IMR-90 (cell line): ENCODE measurements at regions of chr17 and their contacts with region 1.

Region 1: GRCh38 chr17:41354531-41354930 is 3.9 kb upstream of the KRT33A start:
- DNase-seq: no peak
- ATAC-seq: no peak
- H3K4me3 ChIP-seq: no peak overlapping the region
- H3K27ac ChIP-seq: no peak overlapping the region
- H3K4me1 ChIP-seq: no peaks in the 10 kb centered on the region
- H3K27me3 ChIP-seq: peaks cover 7% of the 10 kb centered on the region; the same call in 1 of the 2 replicates
- CTCF ChIP-seq: no peak
- POLR2A ChIP-seq: no peak
- RAD21 ChIP-seq: no peak

Region 2: DNA sequence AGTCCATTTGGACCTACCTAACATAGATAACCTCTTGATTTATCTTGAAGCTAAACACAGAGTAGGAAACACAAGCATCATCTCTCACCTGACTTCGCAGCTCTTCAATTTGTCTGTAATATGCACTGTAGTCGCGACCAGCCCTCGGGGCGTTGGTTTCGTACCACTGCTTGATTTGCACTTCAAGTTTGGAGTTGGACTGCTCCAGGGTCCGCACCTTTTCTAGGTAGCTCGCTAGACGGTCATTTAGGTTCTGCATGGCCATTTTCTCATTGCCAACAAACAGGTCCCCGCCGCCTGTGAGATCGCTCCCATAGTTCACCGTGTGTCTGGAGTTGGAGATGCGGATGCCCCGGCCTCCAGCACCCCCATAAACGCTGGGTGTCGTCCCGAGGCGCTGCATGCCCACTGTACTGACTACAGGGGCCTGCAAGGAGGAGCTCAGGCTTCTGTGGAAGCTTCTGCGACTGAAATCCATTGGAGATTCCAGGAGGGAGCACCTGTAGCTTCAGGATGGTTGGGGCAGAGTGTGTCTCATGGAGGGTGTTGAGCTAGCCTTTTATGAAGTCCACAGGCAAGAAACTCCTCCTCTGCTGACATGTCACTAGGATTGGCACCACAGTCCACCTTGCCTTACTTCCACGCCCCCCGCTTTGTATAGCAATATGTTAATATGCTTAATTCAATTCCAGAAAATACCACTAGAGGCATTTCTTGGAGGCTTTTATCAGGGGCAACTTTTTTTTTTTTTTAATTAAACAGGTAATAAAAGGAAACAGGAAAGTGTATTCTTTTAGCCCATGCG is 469.6 kb before region 1 on chr17 and contains the start of gene KRT20:
- CTCF ChIA-PET with region 1: interaction called, 10 read pairs
- POLR2A ChIA-PET with region 1: no interaction called
- dilution Hi-C with region 1: no loop called
- in situ Hi-C with region 1: no loop called
- intact Hi-C with region 1: no loop called
- DNase-seq: no peak
- ATAC-seq: no peak
- H3K4me3 ChIP-seq: no peak within 1 kb of the TSS
- H3K27ac ChIP-seq: no peak within 1 kb of the TSS
- H3K4me1 ChIP-seq: no peaks in the 10 kb centered on the region
- H3K27me3 ChIP-seq: peaks cover 19% of the 10 kb centered on the region
- CTCF ChIP-seq: no peak
- POLR2A ChIP-seq: no peak
- RAD21 ChIP-seq: no peak
- total RNA-seq, gene KRT20: not detected in 2 replicates

Region 3: DNA sequence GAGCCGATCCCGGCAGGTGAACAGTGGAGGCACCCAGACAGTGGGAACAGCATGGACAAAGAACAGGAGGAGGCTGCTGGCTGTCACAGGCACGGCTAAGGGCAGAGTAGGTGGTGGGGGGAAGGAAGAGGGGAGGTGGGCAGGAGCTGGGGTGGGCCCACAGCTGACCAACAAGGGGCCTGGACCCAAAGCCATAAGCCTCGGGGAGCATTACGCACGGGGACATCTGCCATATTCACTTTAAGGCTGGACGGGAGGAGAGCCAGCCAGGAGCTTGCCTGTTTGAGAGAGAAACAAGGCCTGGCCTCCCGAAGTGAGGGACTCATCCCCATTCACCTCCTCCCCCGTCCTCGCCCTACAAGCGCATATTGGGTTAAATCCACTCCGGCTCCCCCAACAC is 399.5 kb after region 1 on chr17:
- CTCF ChIA-PET with region 1: no interaction called
- POLR2A ChIA-PET with region 1: no interaction called
- dilution Hi-C with region 1: no loop called
- in situ Hi-C with region 1: no loop called
- intact Hi-C with region 1: no loop called
- DNase-seq: no peak
- ATAC-seq: no peak
- H3K4me3 ChIP-seq: no peak overlapping the region
- H3K27ac ChIP-seq: no peak overlapping the region
- H3K4me1 ChIP-seq: no peaks in the 10 kb centered on the region
- H3K27me3 ChIP-seq: no peaks in the 10 kb centered on the region
- CTCF ChIP-seq: no peak
- POLR2A ChIP-seq: no peak
- RAD21 ChIP-seq: no peak

Region 4: DNA sequence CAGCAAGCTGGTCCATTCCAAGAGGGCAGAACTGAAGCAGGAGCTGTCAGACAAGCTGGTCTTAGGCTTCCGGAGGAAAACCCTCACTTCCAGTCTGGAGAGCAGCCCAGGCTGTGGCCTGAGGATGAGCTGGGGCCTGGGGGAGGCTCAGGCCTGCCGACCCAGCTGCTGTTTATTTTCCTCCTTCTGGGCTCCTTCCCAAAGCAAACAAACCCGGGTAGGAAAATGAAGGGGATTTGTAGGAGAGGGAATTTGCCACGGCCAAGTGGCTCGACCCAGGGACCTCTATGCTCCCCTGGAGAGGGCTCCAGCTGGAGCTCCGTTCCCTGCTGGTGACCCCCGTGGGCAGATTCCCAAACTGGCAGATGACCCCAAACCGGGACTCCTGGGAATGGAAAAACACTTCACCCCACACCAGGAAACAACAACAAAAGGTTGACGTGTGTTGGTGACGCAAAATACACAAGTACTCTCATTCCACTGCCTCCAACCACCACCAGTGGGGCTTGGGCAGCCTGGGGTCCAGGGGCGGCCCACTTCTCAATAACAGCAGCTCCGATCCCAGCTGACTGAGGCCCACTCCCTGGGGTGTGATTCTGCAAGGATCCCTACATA is 423.1 kb after region 1 on chr17:
- CTCF ChIA-PET with region 1: no interaction called
- POLR2A ChIA-PET with region 1: no interaction called
- dilution Hi-C with region 1: no loop called
- in situ Hi-C with region 1: no loop called
- intact Hi-C with region 1: no loop called
- DNase-seq: peak; percentile 96
- ATAC-seq: peak; percentile 83
- H3K4me3 ChIP-seq: no peak overlapping the region
- H3K27ac ChIP-seq: peak overlapping the region; percentile 82
- H3K4me1 ChIP-seq: peaks cover 34% of the 10 kb centered on the region
- H3K27me3 ChIP-seq: no peaks in the 10 kb centered on the region
- CTCF ChIP-seq: no peak
- POLR2A ChIP-seq: peak; percentile 49; the same call in 1 of the 2 replicates
- RAD21 ChIP-seq: peak; percentile 12; the same call in 1 of the 2 replicates